HepG2 (cell line): ENCODE measurements at regions of chr13 and their contacts with region 1.

Region 1: GRCh38 chr13:68304286-68304893 is 1074.3 kb upstream of the PCDH9 start:
- DNase-seq: peak; percentile 43
- ATAC-seq: peak; percentile 73
- H3K4me3 ChIP-seq: no peak overlapping the region
- H3K27ac ChIP-seq: no peak overlapping the region
- H3K4me1 ChIP-seq: no peaks in the 10 kb centered on the region
- H3K27me3 ChIP-seq: no peaks in the 10 kb centered on the region; a peak in 1 of 5 replicates
- CTCF ChIP-seq: peak; percentile 69
- EP300 ChIP-seq: no peak
- POLR2A ChIP-seq: no peak
- RAD21 ChIP-seq: no peak

Region 2: GRCh38 chr13:68481130-68481529 is 176.7 kb after region 1 on chr13:
- CTCF ChIA-PET with region 1: no interaction called
- POLR2A ChIA-PET with region 1: no interaction called
- in situ Hi-C with region 1: no loop called
- intact Hi-C with region 1: loop called (anchors 10 kb)
- DNase-seq: peak; percentile 16
- ATAC-seq: peak; percentile 71
- H3K4me3 ChIP-seq: no peak overlapping the region
- H3K27ac ChIP-seq: no peak overlapping the region
- H3K4me1 ChIP-seq: peaks cover 7% of the 10 kb centered on the region; the same call in 1 of the 2 replicates
- H3K27me3 ChIP-seq: no peaks in the 10 kb centered on the region
- CTCF ChIP-seq: no peak
- EP300 ChIP-seq: no peak
- POLR2A ChIP-seq: no peak
- RAD21 ChIP-seq: no peak

Region 3: DNA sequence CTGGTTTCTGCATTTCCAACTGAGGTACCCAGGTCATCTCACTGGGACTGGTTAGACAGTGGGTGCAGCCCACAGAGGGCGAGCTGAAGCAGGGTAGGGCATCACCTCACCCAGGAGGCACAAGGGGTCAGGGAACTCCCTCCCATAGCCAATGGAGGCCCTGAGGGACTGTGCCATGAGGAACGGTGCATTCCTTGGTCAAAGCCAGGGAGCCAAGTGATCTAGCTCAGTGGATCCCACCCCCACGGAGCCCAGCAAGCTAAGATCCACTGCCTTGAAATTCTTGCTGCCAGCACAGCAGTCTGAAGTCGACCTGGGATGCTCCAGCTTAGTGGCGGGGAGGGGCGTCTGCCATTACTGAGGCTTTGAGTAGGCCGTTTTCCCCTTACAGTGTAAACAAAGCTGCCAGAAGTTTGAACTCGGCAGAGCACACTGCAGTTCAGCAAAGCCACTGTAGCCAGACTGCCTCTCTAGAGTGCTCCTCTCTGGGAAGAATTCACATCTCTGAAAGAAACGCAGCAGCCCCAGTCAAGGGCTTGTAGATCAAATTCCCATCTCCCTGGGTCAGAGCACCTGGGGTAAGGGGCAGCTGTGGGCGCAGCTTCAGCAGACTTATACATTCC is 312.3 kb after region 1 on chr13:
- CTCF ChIA-PET with region 1: no interaction called
- POLR2A ChIA-PET with region 1: no interaction called
- in situ Hi-C with region 1: no loop called
- intact Hi-C with region 1: loop called (anchors 1 kb)
- DNase-seq: peak; percentile 9
- ATAC-seq: peak; percentile 93
- H3K4me3 ChIP-seq: no peak overlapping the region; a peak in 1 of 6 replicates
- H3K27ac ChIP-seq: no peak overlapping the region
- H3K4me1 ChIP-seq: peaks cover 18% of the 10 kb centered on the region
- H3K27me3 ChIP-seq: no peaks in the 10 kb centered on the region
- CTCF ChIP-seq: no peak
- EP300 ChIP-seq: no peak
- POLR2A ChIP-seq: no peak
- RAD21 ChIP-seq: no peak

Region 4: DNA sequence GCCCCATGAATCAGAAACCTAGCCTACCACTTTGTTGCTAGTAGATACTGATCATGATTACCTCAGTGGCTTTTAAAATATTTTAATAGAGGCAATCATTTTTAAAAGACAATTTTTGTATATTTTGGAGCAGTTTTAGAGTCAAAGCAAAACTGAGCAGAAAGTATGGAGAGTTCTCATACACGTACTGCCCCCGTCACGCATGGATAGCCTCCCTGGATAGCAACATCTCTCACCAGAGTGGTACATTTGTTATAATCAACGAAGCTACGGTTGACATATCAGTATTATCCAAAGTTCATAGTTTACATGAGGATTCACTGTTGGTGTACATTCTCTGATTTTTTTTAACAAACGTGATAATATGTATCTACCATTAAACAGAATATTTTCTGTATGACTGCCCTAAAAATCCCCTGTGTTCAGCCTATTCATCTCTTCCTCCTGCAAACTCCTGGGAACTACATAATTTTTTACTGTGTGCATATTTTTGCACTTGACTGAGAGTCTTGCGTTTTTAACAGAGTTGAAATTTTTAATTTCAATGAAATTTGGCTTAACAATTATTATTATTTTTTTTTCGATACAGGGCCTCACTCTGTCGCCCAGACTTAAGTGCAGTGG is 362.5 kb after region 1 on chr13:
- CTCF ChIA-PET with region 1: no interaction called
- POLR2A ChIA-PET with region 1: no interaction called
- in situ Hi-C with region 1: no loop called
- intact Hi-C with region 1: loop called (anchors 10 kb)
- DNase-seq: no peak
- ATAC-seq: no peak
- H3K4me3 ChIP-seq: no peak overlapping the region
- H3K27ac ChIP-seq: no peak overlapping the region
- H3K4me1 ChIP-seq: no peaks in the 10 kb centered on the region
- H3K27me3 ChIP-seq: no peaks in the 10 kb centered on the region; a peak in 1 of 5 replicates
- CTCF ChIP-seq: no peak
- EP300 ChIP-seq: no peak
- POLR2A ChIP-seq: no peak
- RAD21 ChIP-seq: no peak

Region 5: DNA sequence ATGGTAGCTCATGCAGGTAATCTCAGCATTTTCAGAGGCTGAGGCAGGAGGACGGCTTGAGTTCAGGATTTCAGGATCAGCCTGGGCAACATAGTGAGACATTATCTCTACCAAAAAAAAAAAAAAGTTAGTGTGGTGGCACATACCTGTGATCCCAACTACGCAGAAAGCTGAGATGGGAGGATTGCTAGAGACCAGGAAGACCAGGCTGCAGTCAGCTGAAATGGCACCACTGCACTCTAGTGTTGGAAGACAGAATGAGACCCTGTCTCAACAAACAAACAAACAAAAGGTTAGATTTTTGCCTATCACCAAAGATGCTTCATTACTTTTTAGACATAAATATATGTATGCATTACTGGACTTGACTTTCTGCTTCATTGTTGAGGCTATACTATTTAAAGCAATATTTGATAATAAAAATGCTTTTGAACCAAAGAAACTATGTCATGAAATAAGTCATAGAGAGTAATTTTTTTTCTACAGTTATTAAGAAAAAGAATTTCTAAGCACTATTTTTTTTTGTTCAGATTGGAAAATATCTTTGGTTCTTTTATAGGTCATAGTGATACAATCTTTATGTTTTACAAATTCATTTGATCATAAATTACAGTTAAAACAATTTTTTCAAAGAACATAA is 623.1 kb after region 1 on chr13:
- CTCF ChIA-PET with region 1: interaction called, 7 read pairs
- POLR2A ChIA-PET with region 1: no interaction called
- in situ Hi-C with region 1: loop called (anchors 10 kb)
- intact Hi-C with region 1: loop called (anchors 1 kb)
- DNase-seq: peak; percentile 12
- ATAC-seq: peak; percentile 93
- H3K4me3 ChIP-seq: no peak overlapping the region
- H3K27ac ChIP-seq: no peak overlapping the region
- H3K4me1 ChIP-seq: no peaks in the 10 kb centered on the region
- H3K27me3 ChIP-seq: no peaks in the 10 kb centered on the region
- CTCF ChIP-seq: peak; percentile 71
- EP300 ChIP-seq: no peak
- POLR2A ChIP-seq: no peak
- RAD21 ChIP-seq: no peak

Region 6: DNA sequence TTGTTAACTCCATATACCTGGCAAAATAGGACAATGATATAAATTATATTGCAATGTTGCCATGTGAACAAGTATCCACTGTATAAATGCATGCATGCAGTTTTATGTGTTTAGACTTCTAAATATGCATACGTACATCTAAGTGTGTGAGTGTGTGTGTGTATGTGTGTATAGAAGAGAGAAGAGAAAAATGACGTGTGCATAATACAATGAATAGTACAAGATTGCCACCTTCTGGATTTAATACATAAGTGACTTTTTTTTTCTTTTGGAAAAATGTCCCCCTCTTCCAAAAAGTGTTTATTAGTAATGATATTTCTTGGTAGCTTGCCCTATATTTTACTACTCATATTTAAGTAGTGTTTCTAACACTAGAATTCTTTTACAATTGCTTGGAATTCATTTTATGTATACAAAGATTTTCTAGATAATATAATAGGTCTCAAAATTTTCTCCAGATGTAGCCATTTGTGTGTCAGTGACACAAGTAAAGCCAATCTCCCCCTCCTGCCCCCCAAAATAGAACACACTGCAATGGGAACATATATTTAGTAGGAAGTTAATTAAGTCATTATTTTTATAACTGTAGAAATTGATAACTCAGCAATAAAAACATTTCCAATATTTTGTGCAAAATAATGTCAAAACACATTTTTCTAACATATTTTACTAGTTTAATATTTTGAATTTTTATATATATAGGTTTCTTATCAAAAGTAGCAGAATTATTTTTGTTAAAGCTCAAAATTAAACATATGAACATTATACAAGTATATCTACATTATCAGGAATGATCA is 1019.9 kb after region 1 on chr13:
- CTCF ChIA-PET with region 1: no interaction called
- POLR2A ChIA-PET with region 1: no interaction called
- in situ Hi-C with region 1: no loop called
- intact Hi-C with region 1: loop called (anchors 5 kb)
- DNase-seq: peak; percentile 3
- ATAC-seq: no peak
- H3K4me3 ChIP-seq: no peak overlapping the region
- H3K27ac ChIP-seq: no peak overlapping the region
- H3K4me1 ChIP-seq: no peaks in the 10 kb centered on the region
- H3K27me3 ChIP-seq: no peaks in the 10 kb centered on the region
- CTCF ChIP-seq: peak; percentile 26
- EP300 ChIP-seq: no peak
- POLR2A ChIP-seq: no peak
- RAD21 ChIP-seq: no peak